A549 (cell line): ENCODE measurements at regions of chr11 and their contacts with region 1.

Region 1: GRCh38 chr11:64388894-64389293 is 29.9 kb downstream of the RPS6KA4 start:
- DNase-seq: no peak
- ATAC-seq: no peak
- H3K4me3 ChIP-seq: no peak overlapping the region
- H3K27ac ChIP-seq: no peak overlapping the region
- H3K4me1 ChIP-seq: peaks cover 7% of the 10 kb centered on the region; the same call in 1 of the 3 replicates
- CTCF ChIP-seq: no peak
- EP300 ChIP-seq: no peak
- POLR2A ChIP-seq: no peak
- RAD21 ChIP-seq: no peak

Region 2: GRCh38 chr11:64185816-64186498 is 202.9 kb before region 1 on chr11 and contains the start of gene STIP1:
- CTCF ChIA-PET with region 1: no interaction called
- POLR2A ChIA-PET with region 1: no interaction called
- DNase-seq: peak; percentile 99 to 100
- ATAC-seq: peak; percentile 84 to 93
- H3K4me3 ChIP-seq: peak within 1 kb of the TSS; percentile 52
- H3K27ac ChIP-seq: peak within 1 kb of the TSS; percentile 79 to 96
- H3K4me1 ChIP-seq: peaks cover 26% of the 10 kb centered on the region
- CTCF ChIP-seq: no peak
- EP300 ChIP-seq: no peak
- POLR2A ChIP-seq: peak; percentile 79
- RAD21 ChIP-seq: no peak
- polyA plus RNA-seq, gene STIP1: 288 and 300 TPM in 2 replicates

Region 3: DNA sequence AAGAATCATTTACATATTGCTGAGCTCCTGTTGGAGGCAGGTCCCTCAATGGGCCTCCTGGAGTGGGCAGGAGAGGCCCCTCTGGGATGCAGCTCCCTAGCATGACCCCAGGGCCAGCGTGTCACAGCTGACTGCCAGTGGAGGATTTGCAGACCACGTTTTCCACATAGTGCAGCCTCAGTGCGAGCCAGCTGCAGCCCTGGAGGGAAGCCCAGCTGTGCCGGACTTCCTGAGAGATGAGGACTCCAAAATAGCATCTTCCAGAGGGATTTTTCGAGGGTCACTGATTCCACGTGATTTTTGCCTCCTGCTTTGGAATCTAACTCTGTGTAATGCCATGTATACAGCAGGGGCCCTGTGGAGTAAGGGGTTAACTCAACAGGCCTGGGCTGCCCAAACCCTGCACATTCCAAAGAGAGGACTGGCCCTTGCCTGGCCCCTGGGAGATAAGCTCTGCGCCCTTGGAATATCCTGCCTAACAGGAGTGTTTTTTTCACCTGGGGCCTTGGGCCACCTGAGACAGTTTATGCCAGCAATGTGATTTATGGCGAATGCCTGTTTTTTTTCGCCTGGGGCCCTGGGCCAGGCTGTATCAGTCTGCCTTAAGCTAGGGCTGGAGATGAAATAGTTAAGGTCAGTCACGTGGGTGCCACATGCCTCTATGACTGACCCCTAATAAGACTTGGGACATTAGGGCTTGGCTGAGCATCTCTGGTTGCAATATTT is 17.5 kb after region 1 on chr11:
- CTCF ChIA-PET with region 1: interaction called, 10 read pairs
- POLR2A ChIA-PET with region 1: no interaction called
- DNase-seq: no peak
- ATAC-seq: no peak
- H3K4me3 ChIP-seq: no peak overlapping the region
- H3K27ac ChIP-seq: no peak overlapping the region
- H3K4me1 ChIP-seq: no peaks in the 10 kb centered on the region
- CTCF ChIP-seq: no peak
- EP300 ChIP-seq: no peak
- POLR2A ChIP-seq: no peak
- RAD21 ChIP-seq: no peak

Region 4: DNA sequence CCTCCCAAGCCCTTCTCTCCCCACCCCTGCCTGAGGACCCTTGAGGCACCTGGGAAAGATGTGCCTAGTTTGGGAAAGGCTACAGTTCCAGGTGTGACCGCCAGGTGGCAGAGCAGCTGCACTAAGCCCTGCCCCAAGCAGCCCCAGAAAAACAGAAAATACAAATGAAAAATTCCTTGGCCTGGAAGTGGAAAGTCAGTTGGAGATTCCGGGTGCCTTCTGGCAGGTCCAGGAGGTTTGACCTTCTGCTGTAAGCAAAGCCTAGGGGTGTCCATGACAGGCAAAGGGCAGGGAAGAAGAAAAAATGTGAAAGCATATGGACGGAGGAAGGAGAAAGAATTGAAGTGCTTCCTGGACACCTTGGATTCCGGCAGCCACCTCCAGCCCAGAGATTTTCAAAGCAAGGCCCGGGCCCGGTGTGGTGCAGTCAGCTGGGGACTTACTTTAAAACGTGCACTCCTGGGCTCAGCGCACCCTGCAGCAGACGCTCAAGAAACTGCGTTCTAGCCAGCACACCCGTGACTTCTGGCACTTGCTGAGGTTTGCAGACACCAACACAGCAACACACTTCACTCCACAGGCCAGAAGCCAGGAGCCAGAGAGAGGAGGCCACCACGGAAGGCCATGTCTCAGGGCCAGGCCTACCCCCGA is 164.8 kb after region 1 on chr11:
- CTCF ChIA-PET with region 1: no interaction called
- POLR2A ChIA-PET with region 1: no interaction called
- DNase-seq: peak; percentile 43 to 60
- ATAC-seq: peak; percentile 41 to 77; a peak in 3 of 6 replicates
- H3K4me3 ChIP-seq: no peak overlapping the region
- H3K27ac ChIP-seq: peak overlapping the region; percentile 78 to 85; a peak in 4 of 6 replicates
- H3K4me1 ChIP-seq: peaks cover 27% of the 10 kb centered on the region
- CTCF ChIP-seq: peak; percentile 93
- EP300 ChIP-seq: no peak
- POLR2A ChIP-seq: no peak
- RAD21 ChIP-seq: peak; percentile 87 to 89